ENCODE measurements at regions of chr12 and their contacts with region 1.

Region 1: GRCh38 chr12:106136263-106136662 is 2.5 kb downstream of the NUAK1 start:
- DNase-seq: peak; percentile 92
- ATAC-seq: peak; percentile 15

Region 2: DNA sequence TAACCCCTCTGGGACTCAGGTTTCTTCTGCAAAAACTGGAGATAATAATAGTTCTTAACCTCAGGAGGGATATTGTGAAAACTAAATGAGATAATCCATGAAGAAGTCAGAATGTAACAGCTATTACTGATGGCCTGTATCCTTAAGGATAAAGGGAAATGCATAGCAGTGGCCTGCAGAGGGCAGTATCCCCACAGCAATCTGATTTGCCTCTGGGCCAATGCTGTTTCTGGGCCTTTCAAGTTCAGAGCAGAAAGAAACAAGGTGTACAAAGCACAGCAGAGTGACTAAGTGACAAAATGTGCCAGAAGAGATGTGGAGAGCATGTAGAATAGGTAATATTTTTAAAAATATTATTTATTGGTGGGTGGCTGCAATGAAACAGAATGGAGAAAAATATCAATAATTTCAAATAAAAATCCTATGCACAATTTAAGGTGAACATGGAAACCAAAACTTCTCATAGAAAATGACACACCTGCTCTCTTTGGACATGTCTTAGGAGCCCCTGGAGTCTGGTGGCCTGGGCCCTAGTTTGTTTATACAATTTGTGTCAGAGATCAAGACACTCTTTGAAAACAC is 715.5 kb before region 1 on chr12:
- intact Hi-C with region 1: loop called (anchors 2 kb)
- DNase-seq: no peak
- ATAC-seq: peak; percentile 86

Region 3: GRCh38 chr12:105805735-105806399 is 330.4 kb before region 1 on chr12:
- intact Hi-C with region 1: loop called (anchors 10 kb)
- DNase-seq: peak; percentile 60
- ATAC-seq: peak; percentile 54

Region 4: DNA sequence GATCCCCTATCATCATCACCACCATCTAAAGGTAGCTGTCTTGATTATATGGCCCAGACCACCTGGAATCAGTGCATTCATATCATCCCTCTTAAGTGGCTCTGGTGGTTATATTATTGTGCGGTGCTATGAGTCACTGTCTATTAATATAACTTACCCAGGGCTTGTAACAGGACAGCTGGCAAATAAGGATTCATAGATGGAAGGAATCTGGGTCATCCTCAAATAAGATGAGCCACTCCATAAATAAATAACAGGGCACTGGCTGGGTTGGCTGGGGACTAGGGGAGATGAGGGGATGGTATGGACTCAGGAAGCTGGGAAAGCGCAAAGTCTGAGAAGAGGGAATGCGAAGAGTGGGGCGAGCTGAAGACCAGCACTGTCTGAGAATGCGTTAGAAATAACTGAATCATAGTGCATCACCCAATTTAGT is 213.6 kb before region 1 on chr12:
- intact Hi-C with region 1: loop called (anchors 5 kb)
- DNase-seq: no peak
- ATAC-seq: peak; percentile 82

Region 5: DNA sequence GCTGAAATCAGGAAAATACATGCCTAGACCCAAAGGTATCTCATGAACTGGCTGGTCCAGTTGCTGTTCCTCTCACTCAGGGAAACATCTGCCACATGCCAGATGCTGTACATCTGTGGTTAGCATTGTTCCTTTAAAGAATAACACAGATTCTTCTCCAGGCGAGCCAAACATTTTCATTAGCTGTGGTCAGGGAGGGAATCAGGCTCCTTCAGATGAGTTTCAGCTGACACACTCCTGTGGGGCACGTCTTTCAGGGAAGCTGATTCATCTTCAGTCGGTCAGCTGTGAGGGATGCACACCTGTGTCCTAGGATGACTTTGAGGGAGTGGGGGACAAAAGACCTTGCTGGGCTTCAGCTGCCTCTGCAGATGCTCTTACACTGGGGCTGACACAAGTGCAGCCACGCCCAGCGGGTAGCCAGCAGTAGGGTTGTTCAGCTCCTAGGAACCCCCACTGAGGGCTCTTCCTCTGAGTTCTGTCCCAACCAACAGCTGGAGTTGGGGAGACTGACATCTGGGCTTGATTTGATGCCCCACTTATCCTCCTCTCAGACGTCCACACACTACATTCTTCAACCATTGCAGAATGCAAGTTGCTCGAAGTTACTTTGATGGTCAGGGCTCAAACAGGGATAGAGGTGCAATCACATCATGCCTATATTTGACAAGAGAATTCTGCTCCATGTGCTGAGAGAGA is 152.5 kb before region 1 on chr12:
- intact Hi-C with region 1: loop called (anchors 5 kb)
- DNase-seq: no peak
- ATAC-seq: no peak

Region 6: DNA sequence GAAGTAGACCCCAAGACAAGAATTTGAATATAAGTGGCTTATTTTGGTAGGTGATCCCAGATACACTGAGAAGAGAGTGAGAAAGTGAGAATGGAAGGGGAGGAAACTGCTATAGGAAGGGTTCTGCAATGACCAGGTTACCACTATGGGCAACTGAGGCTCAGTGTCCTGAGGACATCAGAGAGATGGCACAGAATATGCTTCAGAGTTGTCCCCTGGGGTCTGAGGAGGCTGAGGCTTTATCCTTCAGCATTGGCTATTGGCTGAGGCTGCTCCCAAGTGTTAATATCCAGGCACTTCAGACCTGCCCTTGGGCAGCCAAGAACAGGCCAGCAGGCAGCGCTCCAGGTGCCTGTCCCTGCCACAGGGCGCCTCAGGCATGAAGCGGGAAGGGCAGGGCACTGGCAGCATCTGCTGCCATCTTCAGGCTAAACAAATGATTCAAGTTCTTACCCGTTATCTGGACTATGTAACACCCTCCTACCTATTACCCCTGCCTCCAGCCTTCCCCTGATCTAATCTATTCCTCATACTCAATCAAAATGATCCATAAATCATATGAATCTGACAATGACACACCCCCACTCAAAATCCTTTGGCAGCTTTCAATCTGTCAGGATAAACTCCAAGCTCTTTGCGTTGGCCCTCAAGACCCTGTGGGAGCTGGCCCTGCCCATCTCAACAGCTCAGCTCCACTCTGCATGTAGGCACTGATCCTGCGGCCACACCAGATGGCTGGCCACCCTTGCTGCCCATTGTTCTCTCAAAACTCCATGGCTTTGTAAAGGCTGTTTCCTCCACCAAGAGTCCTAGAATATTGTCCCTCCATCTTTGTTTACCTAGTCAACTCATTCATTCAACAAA is 69.2 kb after region 1 on chr12:
- intact Hi-C with region 1: loop called (anchors 1 kb)
- DNase-seq: peak; percentile 76
- ATAC-seq: peak; percentile 99

Region 7: GRCh38 chr12:106302401-106303201 is 166.3 kb after region 1 on chr12 and contains the start of gene TCP11L2:
- intact Hi-C with region 1: loop called (anchors 10 kb)
- DNase-seq: peak; percentile 96
- ATAC-seq: peak; percentile 86
- total RNA-seq, gene TCP11L2: 93.7 TPM